Brain microvascular endothelial cell (primary cell): ENCODE measurements at regions of chr14 and their contacts with region 1.

Region 1: GRCh38 chr14:95561001-95561412 is 26.2 kb downstream of the GLRX5 start:
- DNase-seq: peak; percentile 84
- H3K4me3 ChIP-seq: no peak overlapping the region
- H3K27ac ChIP-seq: no peak overlapping the region
- H3K27me3 ChIP-seq: no peaks in the 10 kb centered on the region
- CTCF ChIP-seq: peak; percentile 95

Region 2: DNA sequence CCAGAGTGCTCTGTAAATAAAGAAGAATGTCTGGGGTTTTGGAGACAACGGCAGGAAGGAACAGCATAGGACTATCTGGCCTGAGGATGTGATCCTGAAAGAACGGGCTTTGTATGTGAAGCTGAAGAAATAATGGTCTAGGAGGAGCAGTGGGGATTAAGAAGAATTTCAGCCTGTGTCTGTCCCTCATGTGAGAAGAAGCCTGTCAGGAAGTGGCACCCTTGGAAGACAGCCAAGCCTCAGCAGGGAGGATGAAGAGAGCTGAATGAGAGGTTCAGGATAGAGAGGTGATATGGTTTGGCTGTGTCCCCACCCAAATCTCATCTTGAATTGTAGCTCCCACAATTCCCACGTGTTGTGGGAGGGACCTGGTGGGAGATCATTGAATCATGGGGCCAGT is 209.8 kb after region 1 on chr14:
- in situ Hi-C with region 1: no loop called
- DNase-seq: no peak
- H3K4me3 ChIP-seq: no peak overlapping the region
- H3K27ac ChIP-seq: no peak overlapping the region
- H3K27me3 ChIP-seq: no peaks in the 10 kb centered on the region
- CTCF ChIP-seq: no peak

Region 3: DNA sequence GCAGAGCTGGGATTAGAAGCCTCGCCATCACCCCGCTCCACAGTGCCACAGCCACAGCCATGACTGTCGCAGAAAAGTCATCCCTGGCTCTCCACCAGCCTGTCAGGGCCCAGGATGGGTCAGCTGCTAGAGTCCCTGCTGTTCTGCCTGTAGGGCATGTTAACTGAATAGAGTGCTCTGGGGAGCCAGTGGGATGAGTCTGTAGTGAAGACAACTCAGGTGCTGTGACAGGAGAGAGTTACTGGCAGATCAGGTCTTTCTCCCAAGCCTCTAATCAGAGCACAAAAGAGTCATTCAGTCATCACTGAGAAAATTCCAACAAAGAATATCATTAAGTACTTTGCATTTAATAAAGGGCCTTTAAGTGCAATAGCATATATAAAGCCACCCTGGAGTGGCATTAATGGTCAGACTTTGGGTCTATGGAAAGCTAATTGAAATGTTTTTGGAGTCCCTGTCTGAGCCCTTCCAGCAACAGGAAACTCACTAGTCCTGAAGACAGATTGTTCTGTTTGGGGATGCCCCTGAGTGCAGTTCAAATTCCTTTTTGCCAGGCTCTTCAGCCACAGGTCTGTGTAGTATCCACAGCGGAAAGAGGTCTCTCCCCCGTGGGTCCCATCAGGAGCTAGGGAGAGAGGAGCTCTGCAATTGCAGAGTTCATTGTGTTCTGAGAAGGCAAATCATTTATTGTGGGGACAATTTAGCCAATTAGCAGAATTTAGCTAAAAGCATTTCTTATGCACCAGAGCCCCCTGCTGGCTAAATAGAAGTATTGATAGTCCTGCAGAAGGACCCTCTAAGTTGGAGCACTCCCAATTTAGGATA is 433.0 kb after region 1 on chr14:
- in situ Hi-C with region 1: loop called (anchors 25 kb)
- DNase-seq: peak; percentile 11
- H3K4me3 ChIP-seq: no peak overlapping the region
- H3K27ac ChIP-seq: no peak overlapping the region
- H3K27me3 ChIP-seq: peaks cover 5% of the 10 kb centered on the region
- CTCF ChIP-seq: peak; percentile 77